Activated CD8-positive, alpha-beta T cell treated with anti-CD3 and anti-CD28 coated beads for 36 hours (primary cell): ENCODE measurements at regions of chr1 and their contacts with region 1.

Region 1: DNA sequence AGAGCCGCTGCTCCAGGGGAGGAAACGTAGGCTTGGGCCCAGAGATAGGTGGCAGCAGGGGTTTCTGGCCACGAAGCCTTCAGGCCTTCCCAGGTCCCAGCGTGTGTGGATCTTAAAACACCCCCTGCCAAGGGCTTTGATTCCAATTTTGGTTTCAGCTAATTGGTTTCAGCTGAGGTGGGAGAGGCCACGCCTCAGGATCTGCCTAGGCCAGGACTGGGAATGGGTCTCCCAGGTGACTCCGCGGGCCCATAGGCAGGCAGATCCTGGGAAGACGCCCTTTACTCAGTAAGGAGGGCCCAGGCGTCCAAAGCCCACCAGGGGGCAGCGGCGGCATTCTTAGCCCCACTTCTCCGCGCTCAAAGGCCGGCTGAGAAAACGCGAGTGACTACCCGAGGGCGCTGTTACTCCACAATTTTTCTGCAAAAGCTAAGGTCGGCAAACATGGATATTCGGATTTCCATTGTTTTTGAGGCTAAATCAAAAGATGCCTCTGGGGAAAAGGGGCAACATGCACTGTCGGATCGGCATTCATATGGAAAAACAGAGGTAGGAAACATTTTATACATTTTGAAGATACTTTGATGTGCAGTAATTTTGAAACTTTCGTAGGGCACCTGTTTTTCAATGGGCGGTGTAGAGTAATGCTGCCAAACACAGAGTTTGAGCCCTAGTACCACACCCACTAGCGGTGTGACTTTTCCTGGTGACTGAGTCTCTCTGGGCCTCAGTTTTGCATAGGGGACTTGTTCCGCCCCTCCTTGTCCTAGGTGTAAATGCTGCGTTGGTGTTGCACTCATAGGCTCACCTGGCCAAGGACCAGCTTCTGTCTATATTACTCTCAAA is 31.8 kb upstream of the BCL10 start:
- DNase-seq: peak; percentile 85
- ATAC-seq: peak; percentile 94
- H3K4me3 Mint-ChIP-seq: no peak overlapping the region
- H3K27ac Mint-ChIP-seq: no peak overlapping the region
- H3K4me1 Mint-ChIP-seq: peaks cover 5% of the 10 kb centered on the region
- H3K27me3 Mint-ChIP-seq: peaks cover 38% of the 10 kb centered on the region
- CTCF ChIP-seq: peak; percentile 84

Region 2: GRCh38 chr1:85297855-85298629 is 10.2 kb before region 1 on chr1:
- CTCF ChIA-PET with region 1: interaction called, 11 read pairs
- POLR2A ChIA-PET with region 1: interaction called, 6 read pairs
- intact Hi-C with region 1: no loop called
- DNase-seq: peak; percentile 92
- ATAC-seq: peak; percentile 92
- H3K4me3 Mint-ChIP-seq: peak overlapping the region; percentile 43
- H3K27ac Mint-ChIP-seq: peak overlapping the region; percentile 84
- H3K4me1 Mint-ChIP-seq: peaks cover 32% of the 10 kb centered on the region
- H3K27me3 Mint-ChIP-seq: peaks cover 5% of the 10 kb centered on the region
- CTCF ChIP-seq: no peak

Region 3: GRCh38 chr1:85363521-85363920 is 55.3 kb after region 1 on chr1:
- CTCF ChIA-PET with region 1: no interaction called
- POLR2A ChIA-PET with region 1: no interaction called
- intact Hi-C with region 1: no loop called
- DNase-seq: no peak
- ATAC-seq: no peak
- H3K4me3 Mint-ChIP-seq: no peak overlapping the region
- H3K27ac Mint-ChIP-seq: no peak overlapping the region
- H3K4me1 Mint-ChIP-seq: no peaks in the 10 kb centered on the region
- H3K27me3 Mint-ChIP-seq: peaks cover 9% of the 10 kb centered on the region
- CTCF ChIP-seq: no peak

Region 4: GRCh38 chr1:85464497-85465098 is 156.4 kb after region 1 on chr1:
- CTCF ChIA-PET with region 1: interaction called, 5 read pairs
- POLR2A ChIA-PET with region 1: no interaction called
- intact Hi-C with region 1: loop called (anchors 10 kb)
- DNase-seq: peak; percentile 71
- ATAC-seq: peak; percentile 73
- H3K4me3 Mint-ChIP-seq: peak overlapping the region; percentile 52
- H3K27ac Mint-ChIP-seq: no peak overlapping the region
- H3K4me1 Mint-ChIP-seq: peaks cover 10% of the 10 kb centered on the region
- H3K27me3 Mint-ChIP-seq: peaks cover 55% of the 10 kb centered on the region
- CTCF ChIP-seq: no peak

Region 5: DNA sequence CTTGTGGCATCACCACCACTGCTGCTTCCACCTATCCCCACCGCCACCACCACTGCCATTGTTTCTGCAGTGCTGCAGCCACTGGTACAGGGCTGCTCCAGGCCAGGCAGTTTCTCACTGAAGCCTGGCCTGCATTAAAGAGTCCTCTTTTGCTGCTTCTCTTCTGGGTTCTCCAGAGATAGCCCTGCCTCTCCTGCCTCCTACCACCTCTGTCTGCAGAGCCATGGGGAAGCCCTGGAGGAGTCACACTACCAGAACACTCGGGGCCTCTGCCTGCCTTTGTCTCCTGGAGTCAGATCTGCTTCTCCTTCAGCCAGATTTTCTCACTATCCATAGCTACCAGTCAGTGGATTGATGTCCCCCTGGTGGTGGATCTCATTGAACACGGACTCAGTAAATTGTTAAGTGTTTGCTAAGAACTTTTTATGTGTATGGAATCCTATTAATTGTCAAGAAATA is 194.4 kb after region 1 on chr1:
- CTCF ChIA-PET with region 1: interaction called, 10 read pairs
- POLR2A ChIA-PET with region 1: no interaction called
- intact Hi-C with region 1: no loop called
- DNase-seq: peak; percentile 15
- ATAC-seq: no peak
- H3K4me3 Mint-ChIP-seq: no peak overlapping the region
- H3K27ac Mint-ChIP-seq: no peak overlapping the region
- H3K4me1 Mint-ChIP-seq: no peaks in the 10 kb centered on the region
- H3K27me3 Mint-ChIP-seq: peaks cover 19% of the 10 kb centered on the region
- CTCF ChIP-seq: no peak

Region 6: GRCh38 chr1:85580872-85581801 is 272.9 kb after region 1 on chr1:
- CTCF ChIA-PET with region 1: interaction called, 12 read pairs
- POLR2A ChIA-PET with region 1: no interaction called
- intact Hi-C with region 1: loop called (anchors 5 kb)
- DNase-seq: peak; percentile 72
- ATAC-seq: peak; percentile 68
- H3K4me3 Mint-ChIP-seq: peak overlapping the region; percentile 74
- H3K27ac Mint-ChIP-seq: no peak overlapping the region
- H3K4me1 Mint-ChIP-seq: peaks cover 32% of the 10 kb centered on the region
- H3K27me3 Mint-ChIP-seq: peaks cover 64% of the 10 kb centered on the region
- CTCF ChIP-seq: peak; percentile 75

Region 7: DNA sequence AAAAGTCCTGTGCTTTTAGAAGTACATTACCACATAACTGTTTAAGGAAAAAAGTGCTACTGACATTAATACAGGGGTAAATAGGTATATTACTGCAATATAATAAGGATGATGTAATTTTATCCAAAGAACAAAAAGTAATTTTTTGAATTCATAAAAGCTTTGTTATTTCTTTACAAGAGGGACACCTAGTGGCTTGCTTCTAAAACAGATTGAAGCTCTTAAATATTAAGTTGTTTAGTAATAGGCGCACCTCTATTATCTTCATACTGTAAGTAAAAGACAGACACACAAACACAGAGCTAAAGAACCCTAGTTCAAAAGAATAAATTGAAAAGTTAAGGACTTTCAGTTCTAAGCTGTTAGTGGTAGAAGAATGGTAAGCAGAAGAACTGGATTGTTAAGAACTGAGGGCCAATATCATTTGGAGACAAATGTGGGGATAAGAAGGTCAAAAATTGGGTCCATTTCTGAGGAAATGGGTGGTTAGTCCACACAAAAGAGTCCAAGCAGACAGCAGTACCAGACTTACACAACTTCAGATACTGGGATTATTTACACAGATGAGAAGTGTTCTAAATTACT is 384.6 kb after region 1 on chr1:
- CTCF ChIA-PET with region 1: interaction called, 8 read pairs
- POLR2A ChIA-PET with region 1: no interaction called
- intact Hi-C with region 1: loop called (anchors 10 kb)
- DNase-seq: no peak
- ATAC-seq: no peak
- H3K4me3 Mint-ChIP-seq: no peak overlapping the region
- H3K27ac Mint-ChIP-seq: no peak overlapping the region
- H3K4me1 Mint-ChIP-seq: peaks cover 18% of the 10 kb centered on the region
- H3K27me3 Mint-ChIP-seq: no peaks in the 10 kb centered on the region
- CTCF ChIP-seq: peak; percentile 24

Region 8: GRCh38 chr1:86018283-86018923 is 710.2 kb after region 1 on chr1:
- CTCF ChIA-PET with region 1: interaction called, 11 read pairs
- POLR2A ChIA-PET with region 1: no interaction called
- intact Hi-C with region 1: loop called (anchors 10 kb)
- DNase-seq: peak; percentile 33
- ATAC-seq: peak; percentile 45
- H3K4me3 Mint-ChIP-seq: no peak overlapping the region
- H3K27ac Mint-ChIP-seq: no peak overlapping the region
- H3K4me1 Mint-ChIP-seq: no peaks in the 10 kb centered on the region
- H3K27me3 Mint-ChIP-seq: no peaks in the 10 kb centered on the region
- CTCF ChIP-seq: peak; percentile 57